Psoas muscle (tissue), 8 donors: ENCODE measurements at regions of chr11 and their contacts with region 1.

Region 1: GRCh38 chr11:26947379-26947844 is 46.5 kb upstream of the FIBIN start:
- DNase-seq: peak; percentile 32 to 52
- ATAC-seq: peak; percentile 46 to 86 (median 78)
- H3K4me3 ChIP-seq: no peak overlapping the region
- H3K27ac ChIP-seq: no peak overlapping the region
- H3K4me1 ChIP-seq: no peaks in the 10 kb centered on the region
- H3K27me3 ChIP-seq: no peaks in the 10 kb centered on the region
- CTCF ChIP-seq: no peak

Region 2: GRCh38 chr11:26878959-26879581 is 68.3 kb before region 1 on chr11:
- intact Hi-C with region 1: loop called in 1 of 2 experiments (anchors 2 kb)
- DNase-seq: no peak
- ATAC-seq: no peak
- H3K4me3 ChIP-seq: no peak overlapping the region
- H3K27ac ChIP-seq: no peak overlapping the region
- H3K4me1 ChIP-seq: no peaks in the 10 kb centered on the region
- H3K27me3 ChIP-seq: no peaks in the 10 kb centered on the region
- CTCF ChIP-seq: no peak